Uterus (tissue), 4 donors: ENCODE measurements at regions of chr7 and their contacts with region 1.

Region 1: GRCh38 chr7:120805636-120806388 is 52.1 kb downstream of the TSPAN12 start:
- DNase-seq: peak; percentile 26 to 67
- H3K4me3 ChIP-seq: no peak overlapping the region
- H3K27ac ChIP-seq: no peak overlapping the region
- H3K4me1 ChIP-seq: no peaks in the 10 kb centered on the region
- H3K27me3 ChIP-seq: no peaks in the 10 kb centered on the region
- CTCF ChIP-seq: peak; percentile 73 to 79 (median 76)
- POLR2A ChIP-seq: no peak

Region 2: GRCh38 chr7:120857588-120858573 is 52.1 kb after region 1 on chr7 and contains the start of gene TSPAN12:
- intact Hi-C with region 1: loop called (anchors 10 kb)
- DNase-seq: peak; percentile 64 to 69
- H3K4me3 ChIP-seq: peak within 1 kb of the TSS; percentile 62 to 73
- H3K27ac ChIP-seq: peak within 1 kb of the TSS; percentile 81 to 85
- H3K4me1 ChIP-seq: no peaks in the 10 kb centered on the region
- H3K27me3 ChIP-seq: no peaks in the 10 kb centered on the region
- CTCF ChIP-seq: peak; percentile 33 to 89 (median 67)
- POLR2A ChIP-seq: no peak
- total RNA-seq, gene TSPAN12: 3.1 to 18.8 (median 11.8) TPM

Region 3: GRCh38 chr7:121352323-121352722 is 546.5 kb after region 1 on chr7:
- intact Hi-C with region 1: no loop called
- DNase-seq: no peak
- H3K4me3 ChIP-seq: no peak overlapping the region
- H3K27ac ChIP-seq: no peak overlapping the region
- H3K4me1 ChIP-seq: no peaks in the 10 kb centered on the region
- H3K27me3 ChIP-seq: no peaks in the 10 kb centered on the region
- CTCF ChIP-seq: no peak
- POLR2A ChIP-seq: no peak